Heart left ventricle (tissue), 16 donors: ENCODE measurements at regions of chrX and their contacts with region 1.

Region 1: DNA sequence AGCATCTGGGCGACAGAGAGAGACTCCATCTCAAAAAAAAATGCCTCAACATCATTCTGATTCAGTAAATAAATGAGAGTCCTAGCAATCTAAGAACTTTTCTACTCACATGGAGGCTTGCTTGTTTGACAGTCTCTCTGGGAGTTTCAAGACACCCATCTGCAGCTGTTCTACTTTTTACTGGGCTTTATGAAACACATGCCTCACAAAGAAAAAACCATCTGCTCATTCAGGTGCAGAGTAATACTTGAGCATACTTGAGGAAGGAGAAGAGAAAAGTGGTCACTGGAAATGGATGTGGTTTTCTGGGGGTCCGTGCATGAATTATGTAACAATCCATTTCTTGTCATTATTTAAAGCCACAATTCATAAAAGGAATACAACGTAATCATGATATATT is 87.1 kb upstream of the DDX53 start:
- DNase-seq: no peak
- ATAC-seq: no peak
- H3K4me3 ChIP-seq: no peak overlapping the region
- H3K27ac ChIP-seq: no peak overlapping the region
- H3K4me1 ChIP-seq: no peaks in the 10 kb centered on the region
- H3K27me3 ChIP-seq: no peaks in the 10 kb centered on the region
- CTCF ChIP-seq: no peak
- POLR2A ChIP-seq: no peak

Region 2: DNA sequence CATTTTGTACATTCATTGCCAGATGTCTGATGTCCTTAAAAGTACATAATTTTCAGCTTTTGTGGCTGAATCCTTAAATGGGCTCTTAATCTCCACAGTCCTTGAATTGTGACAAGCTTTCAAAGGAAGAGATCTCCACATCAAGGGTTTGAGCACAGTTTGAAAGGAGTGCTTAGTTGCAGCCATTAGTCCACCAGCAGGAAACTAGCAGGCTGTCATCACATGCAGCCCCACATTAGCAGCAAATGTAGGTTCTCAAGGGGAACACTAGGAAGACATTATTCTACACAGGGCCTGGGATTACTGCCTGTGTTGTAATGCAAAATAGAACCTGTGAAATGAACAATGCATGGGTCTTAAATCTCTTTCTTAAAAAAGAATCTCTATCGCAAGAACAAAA is 466.7 kb before region 1 on chrX:
- intact Hi-C with region 1: loop called in 1 of 10 experiments (anchors 10 kb)
- DNase-seq: no peak
- ATAC-seq: no peak
- H3K4me3 ChIP-seq: no peak overlapping the region
- H3K27ac ChIP-seq: no peak overlapping the region
- H3K4me1 ChIP-seq: no peaks in the 10 kb centered on the region
- H3K27me3 ChIP-seq: no peaks in the 10 kb centered on the region
- CTCF ChIP-seq: no peak
- POLR2A ChIP-seq: no peak

Region 3: DNA sequence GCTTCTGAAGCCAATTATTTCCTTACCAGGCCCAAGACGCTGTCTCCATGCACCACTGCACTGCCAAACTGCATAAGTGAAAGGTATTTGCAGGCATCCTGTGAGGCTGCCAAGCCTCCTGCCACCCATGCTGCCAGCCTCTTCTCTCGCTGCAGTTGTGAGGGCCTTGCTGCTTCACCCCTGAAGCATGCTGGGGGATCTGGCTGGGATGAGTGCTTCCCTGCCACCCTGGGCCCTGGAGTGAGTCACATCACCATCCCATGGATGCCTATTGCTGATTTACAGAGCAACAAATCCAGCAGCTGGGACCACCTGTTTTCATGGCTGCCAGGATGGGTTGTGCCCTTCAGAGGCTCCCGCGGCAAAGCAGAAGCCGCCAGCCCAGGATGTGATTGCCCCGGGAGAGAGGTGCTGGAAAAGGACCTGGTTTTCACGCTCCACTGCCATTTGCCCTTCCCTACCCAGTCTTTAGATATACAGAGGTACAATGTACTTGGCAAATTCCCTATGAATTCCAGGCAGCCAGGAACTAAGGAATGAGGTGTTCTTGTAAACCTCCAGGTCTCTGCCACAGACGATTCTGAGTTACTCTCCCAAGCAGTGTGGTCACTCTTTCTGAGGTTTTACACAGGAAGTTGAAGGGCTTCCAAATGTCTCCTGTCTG is 380.5 kb after region 1 on chrX:
- intact Hi-C with region 1: no loop called
- DNase-seq: no peak
- ATAC-seq: no peak
- H3K4me3 ChIP-seq: no peak overlapping the region
- H3K27ac ChIP-seq: no peak overlapping the region
- H3K4me1 ChIP-seq: no peaks in the 10 kb centered on the region
- H3K27me3 ChIP-seq: peaks cover 0 to 7% (median 0%) of the 10 kb centered on the region in 9 donors
- CTCF ChIP-seq: no peak
- POLR2A ChIP-seq: no peak

Region 4: DNA sequence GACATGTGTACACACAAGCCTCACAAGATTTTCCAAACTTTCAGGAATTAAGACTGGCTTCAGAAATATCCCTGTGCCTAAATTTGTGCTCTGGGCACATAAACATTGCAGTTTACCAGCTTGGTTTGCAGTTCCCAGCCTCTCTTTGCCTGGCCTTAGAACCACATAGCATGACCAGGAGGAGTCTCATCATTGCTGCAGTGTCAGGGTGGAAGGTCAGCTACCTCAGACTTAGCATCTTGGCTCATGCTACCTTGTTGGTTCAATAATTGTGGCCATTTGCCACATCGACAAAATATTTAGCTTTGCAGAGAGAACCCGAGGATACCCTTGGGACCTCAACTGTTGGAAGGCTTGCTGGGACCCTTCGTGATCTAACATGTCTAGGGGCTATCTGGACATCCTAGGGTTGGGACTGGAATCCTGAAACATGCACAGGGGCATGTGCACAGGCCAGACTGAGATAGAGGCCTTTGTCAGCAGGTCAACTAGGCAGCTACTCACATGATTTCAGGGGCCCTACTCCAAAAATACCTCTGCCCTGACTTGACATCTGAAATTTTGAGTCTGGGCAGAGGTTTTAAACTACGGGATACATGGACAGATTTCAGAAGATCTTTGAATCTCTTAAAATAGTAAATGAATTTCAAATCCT is 1409.3 kb after region 1 on chrX:
- intact Hi-C with region 1: no loop called
- DNase-seq: no peak
- ATAC-seq: no peak
- H3K4me3 ChIP-seq: no peak overlapping the region
- H3K27ac ChIP-seq: no peak overlapping the region
- H3K4me1 ChIP-seq: no peaks in the 10 kb centered on the region
- H3K27me3 ChIP-seq: peaks cover 0 to 46% (median 0%) of the 10 kb centered on the region in 9 donors
- CTCF ChIP-seq: no peak
- POLR2A ChIP-seq: no peak